Dorsolateral prefrontal cortex (tissue), 120 donors: ENCODE measurements at regions of chr16 and their contacts with region 1.

Region 1: GRCh38 chr16:22007509-22008214 is at the start of gene MOSMO:
- DNase-seq: peak; percentile 64 to 89 (median 73)
- H3K4me3 ChIP-seq: peak within 1 kb of the TSS; percentile 71 to 99 (median 91)
- H3K27ac ChIP-seq: peak within 1 kb of the TSS; percentile 23 to 97 (median 88)
- H3K27me3 ChIP-seq: no peaks in the 10 kb centered on the region
- CTCF ChIP-seq: peak in 12 of 56 donors; percentile 6 to 31 (median 16)
- total RNA-seq, gene MOSMO: 25.4 to 64.8 (median 44.1) TPM

Region 2: GRCh38 chr16:21952793-21953540 is 54.7 kb before region 1 on chr16 and contains the start of gene UQCRC2:
- intact Hi-C with region 1: loop called in 1 of 2 experiments (anchors 2 kb)
- DNase-seq: peak; percentile 85 to 96 (median 92)
- H3K4me3 ChIP-seq: peak within 1 kb of the TSS; percentile 67 to 100 (median 94)
- H3K27ac ChIP-seq: peak within 1 kb of the TSS; percentile 92 to 100 (median 98)
- H3K27me3 ChIP-seq: no peaks in the 10 kb centered on the region
- CTCF ChIP-seq: peak in 20 of 56 donors; percentile 2 to 42 (median 18)
- total RNA-seq, gene UQCRC2: 215 to 422 (median 323) TPM

Region 3: DNA sequence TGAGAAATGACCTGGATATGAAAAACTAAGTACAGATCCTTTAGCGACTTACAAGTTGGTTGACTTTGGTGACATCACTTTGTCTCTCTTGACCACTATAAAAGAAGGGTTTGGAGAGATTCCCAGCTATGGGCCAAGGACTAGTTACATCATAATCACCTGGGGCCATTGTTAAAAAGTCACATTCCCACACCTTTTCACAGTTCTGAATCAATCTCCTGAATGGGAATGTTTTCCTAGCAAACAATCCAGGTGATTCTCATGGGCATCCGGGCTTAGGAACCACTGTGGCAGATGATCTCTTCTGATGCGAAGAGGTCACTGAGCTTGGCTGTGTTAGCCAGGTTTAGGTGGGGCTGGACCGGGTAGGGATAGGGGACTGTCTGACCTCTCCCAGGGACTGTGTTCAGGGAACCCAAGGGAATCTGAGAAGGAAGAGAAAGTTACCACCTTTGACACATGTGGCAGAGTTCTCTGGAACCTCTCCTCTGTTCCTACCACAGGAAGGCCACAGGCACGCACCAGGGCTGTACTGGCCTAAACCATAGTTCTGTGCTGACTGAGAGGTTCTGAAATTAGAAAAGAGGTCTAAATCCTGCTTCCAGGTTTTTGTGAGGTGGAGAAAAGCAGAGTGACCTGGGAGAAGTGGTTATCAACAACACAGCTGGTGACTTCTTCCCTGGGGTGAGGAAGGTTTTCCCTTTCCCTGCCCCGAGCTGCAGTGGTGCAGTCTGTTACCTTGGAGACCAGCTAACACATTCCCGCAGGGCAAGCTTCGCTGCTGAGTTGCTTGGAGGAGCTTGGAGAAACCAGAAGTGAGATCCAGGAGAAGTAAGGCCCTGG is 84.3 kb after region 1 on chr16 and contains the start of gene VWA3A:
- intact Hi-C with region 1: loop called in 1 of 2 experiments (anchors 5 kb)
- DNase-seq: peak in 7 of 10 donors; percentile 42 to 67 (median 60)
- H3K4me3 ChIP-seq: peak within 1 kb of the TSS in 33 of 59 donors; percentile 3 to 40 (median 17)
- H3K27ac ChIP-seq: peak within 1 kb of the TSS in 56 of 59 donors; percentile 7 to 84 (median 67)
- H3K27me3 ChIP-seq: no peaks in the 10 kb centered on the region
- CTCF ChIP-seq: no peak
- total RNA-seq, gene VWA3A: 4.7 to 39.2 (median 18.5) TPM

Region 4: DNA sequence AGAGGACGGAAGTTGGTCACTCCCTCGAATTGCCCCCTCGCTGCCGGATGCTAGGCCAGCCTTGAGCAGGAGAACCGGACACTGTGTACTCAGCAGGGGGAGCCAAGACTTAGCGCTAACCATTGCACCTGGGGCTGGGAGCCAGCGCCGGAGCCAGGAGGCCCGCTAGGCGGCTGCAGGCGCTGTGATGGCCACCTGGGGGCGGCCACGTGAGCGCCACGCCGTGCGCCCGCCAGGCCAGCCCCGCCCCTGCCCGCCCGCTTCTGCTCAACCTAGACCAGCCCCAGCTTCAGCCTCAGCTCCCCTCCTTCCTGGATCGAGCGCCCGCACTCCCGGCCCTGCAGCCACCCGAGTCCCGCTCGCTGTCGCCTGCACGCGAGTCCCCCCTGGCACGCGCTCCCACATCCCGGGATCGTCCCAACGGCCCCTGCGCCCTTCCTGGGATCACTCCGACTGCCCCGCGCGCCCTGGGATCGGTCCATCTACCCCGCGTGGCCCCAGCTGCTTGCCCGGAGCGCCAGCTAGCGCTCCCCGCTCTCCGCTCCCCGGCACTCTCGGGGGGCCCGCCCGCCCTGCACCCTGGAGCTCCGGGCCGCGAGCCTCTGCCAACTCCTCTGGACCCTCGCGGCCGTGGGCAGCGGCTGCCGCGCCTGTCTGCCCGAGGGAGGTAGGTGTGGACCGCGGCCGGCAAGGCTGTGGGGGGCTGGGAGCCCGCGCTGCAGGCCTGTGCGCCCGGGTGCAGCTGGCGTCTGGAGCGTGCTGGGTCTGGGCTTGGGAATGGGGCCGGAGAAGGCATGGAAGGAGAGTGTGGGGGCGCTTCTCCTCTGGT is 198.6 kb after region 1 on chr16 and contains the start of gene EEF2K:
- intact Hi-C with region 1: no loop called
- DNase-seq: peak; percentile 66 to 87 (median 82)
- H3K4me3 ChIP-seq: peak within 1 kb of the TSS; percentile 63 to 95 (median 87)
- H3K27ac ChIP-seq: peak within 1 kb of the TSS in 58 of 59 donors; percentile 41 to 93 (median 85)
- H3K27me3 ChIP-seq: no peaks in the 10 kb centered on the region
- CTCF ChIP-seq: peak; percentile 58 to 92 (median 78)
- total RNA-seq, gene EEF2K: 14.7 to 60.6 (median 28.2) TPM

Region 5: GRCh38 chr16:22297114-22297878 is 289.6 kb after region 1 on chr16 and contains the start of gene POLR3E:
- intact Hi-C with region 1: loop called (anchors 2 to 5 kb)
- DNase-seq: peak; percentile 98 to 99 (median 98)
- H3K4me3 ChIP-seq: peak within 1 kb of the TSS; percentile 55 to 98 (median 89)
- H3K27ac ChIP-seq: peak within 1 kb of the TSS; percentile 66 to 97 (median 91)
- H3K27me3 ChIP-seq: no peaks in the 10 kb centered on the region
- CTCF ChIP-seq: peak; percentile 84 to 100 (median 96)
- total RNA-seq, gene POLR3E: 29.2 to 66.1 (median 45.5) TPM